Right ventricle myocardium inferior (tissue), 1 donor: ENCODE measurements at regions of chr7 and their contacts with region 1.

Region 1: DNA sequence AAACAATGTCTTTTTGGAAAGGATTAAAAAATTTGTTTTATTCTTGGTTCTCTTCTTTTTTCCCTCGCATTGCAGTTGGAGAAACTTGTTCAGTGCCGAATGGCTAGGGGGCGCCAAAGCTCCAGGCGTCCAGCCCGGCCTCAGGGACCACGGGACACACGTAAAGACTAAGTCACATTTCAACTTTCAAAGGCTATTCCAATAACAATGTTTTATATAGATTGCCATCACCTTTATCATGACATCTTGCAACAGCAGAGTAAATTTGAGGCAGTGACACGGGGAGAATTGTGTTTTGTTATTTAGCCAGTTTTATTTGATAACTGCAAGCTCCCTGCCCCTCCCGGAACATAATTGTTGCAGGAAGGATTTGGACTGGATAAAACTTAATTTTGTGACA is 2.2 kb upstream of the IGFBP3 start:
- DNase-seq: peak; percentile 78
- ATAC-seq: peak; percentile 35

Region 2: DNA sequence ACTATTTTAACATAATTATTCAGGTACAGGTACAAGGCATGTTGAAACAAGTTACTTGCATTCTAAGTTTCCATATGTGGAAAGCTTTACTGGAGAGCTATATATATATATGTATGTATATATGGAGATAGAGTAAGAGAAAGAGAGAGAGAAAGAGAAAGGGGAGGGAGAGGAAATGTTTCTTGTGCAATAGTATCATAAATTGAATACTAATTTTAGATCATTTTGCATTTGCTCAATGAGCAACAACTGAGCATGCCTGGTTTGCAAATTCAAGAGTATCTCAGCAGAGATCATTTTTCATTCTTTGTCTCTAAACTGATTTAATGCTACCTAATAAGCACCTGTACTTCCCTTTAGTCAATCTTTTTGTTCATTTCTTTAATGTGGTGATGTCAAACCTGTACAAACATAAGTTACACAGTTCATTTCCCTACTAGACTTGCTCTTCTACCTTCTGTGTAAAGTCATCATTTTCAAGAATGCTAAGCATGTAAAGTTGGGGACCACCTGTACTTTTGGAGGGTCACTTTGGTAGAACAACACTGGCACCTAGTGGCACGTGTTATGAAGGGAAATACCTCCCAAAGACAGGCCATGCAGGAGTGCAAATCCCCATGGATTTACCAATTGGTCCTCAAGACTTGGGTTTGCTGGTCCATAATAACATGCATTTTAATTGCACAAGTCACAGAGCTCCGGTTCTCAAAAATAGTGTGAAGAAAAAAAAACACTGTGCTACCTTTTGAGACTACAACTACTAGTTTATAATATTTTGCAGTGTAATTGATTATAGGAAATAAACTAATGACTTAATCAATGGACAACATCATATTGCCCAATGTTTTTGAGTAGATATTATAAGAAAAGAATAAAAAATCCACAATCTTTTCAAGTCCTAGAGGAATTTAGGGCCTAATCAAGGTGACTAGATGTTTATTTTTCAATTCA is 429.0 kb after region 1 on chr7:
- intact Hi-C with region 1: loop called (anchors 1 kb)
- DNase-seq: no peak
- ATAC-seq: no peak

Region 3: GRCh38 chr7:46603780-46604179 is 680.5 kb after region 1 on chr7:
- intact Hi-C with region 1: loop called (anchors 5 kb)
- DNase-seq: peak; percentile 94
- ATAC-seq: peak; percentile 92

Region 4: DNA sequence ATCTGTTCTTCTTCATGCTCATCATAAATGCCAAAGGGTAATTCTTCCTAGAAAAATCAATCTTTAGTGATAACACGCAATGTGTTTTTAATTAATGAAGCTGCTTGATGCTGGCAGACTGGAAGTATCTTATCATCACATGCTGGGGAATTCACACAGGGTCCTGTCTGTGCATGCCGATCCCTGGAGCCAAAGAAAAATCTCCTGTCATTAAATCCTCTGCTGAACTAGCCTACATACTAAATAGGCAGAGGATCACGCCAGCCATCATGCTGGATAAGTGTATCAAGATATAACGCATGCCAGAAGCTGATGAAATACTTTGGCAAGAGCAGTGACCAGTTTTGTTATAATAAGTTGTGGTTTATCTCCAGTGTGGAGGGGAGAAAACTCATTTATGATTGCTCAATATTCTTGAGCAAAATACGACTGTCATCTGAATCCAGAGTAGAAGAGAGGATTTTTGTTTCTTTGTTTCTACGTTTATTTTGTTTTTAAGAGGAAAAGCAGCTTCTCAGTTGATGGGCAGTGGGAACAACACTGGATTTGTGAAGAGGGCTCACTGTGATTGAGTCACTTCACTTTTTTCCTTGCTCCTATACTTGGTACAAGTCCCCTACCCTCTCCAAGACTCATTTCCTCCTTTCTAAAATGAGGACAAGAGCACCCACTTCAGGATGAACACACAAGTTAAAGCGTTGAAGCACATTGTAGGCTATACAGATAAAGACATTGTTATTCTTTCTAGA is 1009.6 kb after region 1 on chr7:
- intact Hi-C with region 1: loop called (anchors 2 kb)
- DNase-seq: peak; percentile 69
- ATAC-seq: peak; percentile 87

Region 5: GRCh38 chr7:47254081-47255006 is 1331.1 kb after region 1 on chr7:
- intact Hi-C with region 1: loop called (anchors 5 kb)
- DNase-seq: peak; percentile 94
- ATAC-seq: peak; percentile 95